ENCODE measurements at regions of chr5 and their contacts with region 1.

Region 1: GRCh38 chr5:132386644-132387286 is 17.3 kb downstream of the SLC22A5 start:
- DNase-seq: peak; percentile 84
- H3K4me3 Mint-ChIP-seq: no peak overlapping the region
- H3K27ac Mint-ChIP-seq: peak overlapping the region; percentile 86
- H3K4me1 Mint-ChIP-seq: peaks cover 57% of the 10 kb centered on the region
- H3K27me3 Mint-ChIP-seq: no peaks in the 10 kb centered on the region

Region 2: GRCh38 chr5:132227485-132228240 is 159.1 kb before region 1 on chr5 and contains the start of gene P4HA2:
- CTCF ChIA-PET with region 1: no interaction called
- POLR2A ChIA-PET with region 1: no interaction called
- DNase-seq: peak; percentile 22
- H3K4me3 Mint-ChIP-seq: peak within 1 kb of the TSS; percentile 45
- H3K27ac Mint-ChIP-seq: no peak within 1 kb of the TSS
- H3K4me1 Mint-ChIP-seq: peaks cover 16% of the 10 kb centered on the region
- H3K27me3 Mint-ChIP-seq: peaks cover 23% of the 10 kb centered on the region
- total RNA-seq, gene P4HA2: 2.3 to 2.5 TPM

Region 3: GRCh38 chr5:132342291-132343180 is 44.2 kb before region 1 on chr5:
- CTCF ChIA-PET with region 1: no interaction called
- POLR2A ChIA-PET with region 1: no interaction called
- DNase-seq: no peak
- H3K4me3 Mint-ChIP-seq: no peak overlapping the region
- H3K27ac Mint-ChIP-seq: no peak overlapping the region
- H3K4me1 Mint-ChIP-seq: no peaks in the 10 kb centered on the region
- H3K27me3 Mint-ChIP-seq: no peaks in the 10 kb centered on the region

Region 4: DNA sequence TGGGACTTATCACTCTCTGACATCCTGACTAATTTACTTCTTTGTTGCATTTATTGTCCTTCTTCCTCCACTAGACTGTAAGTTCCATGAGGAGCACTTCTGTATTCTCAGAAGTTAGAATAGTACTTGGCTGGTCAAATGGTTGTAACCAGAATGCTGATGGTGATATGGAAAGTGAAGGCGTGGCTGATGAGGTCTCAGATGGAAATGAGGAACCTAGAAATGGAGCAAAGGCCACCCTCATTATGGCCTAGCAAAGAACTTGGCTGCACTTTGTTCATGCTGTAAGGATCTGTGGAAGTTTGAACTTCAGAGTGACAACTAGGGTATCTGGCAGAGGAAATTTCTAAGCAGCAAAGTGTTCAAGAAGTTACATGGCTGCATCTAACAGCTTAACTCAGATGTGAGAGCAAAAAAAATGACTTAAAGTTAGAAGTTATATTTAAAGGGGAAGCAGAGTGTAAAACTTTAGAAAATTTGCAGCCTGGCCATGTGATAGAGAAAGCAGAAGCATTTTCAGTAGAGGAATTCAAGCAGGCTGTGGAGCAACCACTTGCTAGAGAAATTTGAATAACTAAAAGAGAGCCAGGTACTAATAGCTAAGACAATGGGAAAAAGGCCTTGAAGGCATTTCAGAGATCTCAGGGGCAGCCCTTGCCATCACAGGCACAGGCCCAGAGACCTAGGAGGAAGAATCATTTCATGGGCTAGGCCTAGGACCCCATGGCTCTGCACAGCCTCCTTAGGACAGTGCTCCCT is 32.2 kb before region 1 on chr5:
- CTCF ChIA-PET with region 1: no interaction called
- POLR2A ChIA-PET with region 1: no interaction called
- DNase-seq: no peak
- H3K4me3 Mint-ChIP-seq: no peak overlapping the region
- H3K27ac Mint-ChIP-seq: no peak overlapping the region
- H3K4me1 Mint-ChIP-seq: no peaks in the 10 kb centered on the region
- H3K27me3 Mint-ChIP-seq: no peaks in the 10 kb centered on the region

Region 5: DNA sequence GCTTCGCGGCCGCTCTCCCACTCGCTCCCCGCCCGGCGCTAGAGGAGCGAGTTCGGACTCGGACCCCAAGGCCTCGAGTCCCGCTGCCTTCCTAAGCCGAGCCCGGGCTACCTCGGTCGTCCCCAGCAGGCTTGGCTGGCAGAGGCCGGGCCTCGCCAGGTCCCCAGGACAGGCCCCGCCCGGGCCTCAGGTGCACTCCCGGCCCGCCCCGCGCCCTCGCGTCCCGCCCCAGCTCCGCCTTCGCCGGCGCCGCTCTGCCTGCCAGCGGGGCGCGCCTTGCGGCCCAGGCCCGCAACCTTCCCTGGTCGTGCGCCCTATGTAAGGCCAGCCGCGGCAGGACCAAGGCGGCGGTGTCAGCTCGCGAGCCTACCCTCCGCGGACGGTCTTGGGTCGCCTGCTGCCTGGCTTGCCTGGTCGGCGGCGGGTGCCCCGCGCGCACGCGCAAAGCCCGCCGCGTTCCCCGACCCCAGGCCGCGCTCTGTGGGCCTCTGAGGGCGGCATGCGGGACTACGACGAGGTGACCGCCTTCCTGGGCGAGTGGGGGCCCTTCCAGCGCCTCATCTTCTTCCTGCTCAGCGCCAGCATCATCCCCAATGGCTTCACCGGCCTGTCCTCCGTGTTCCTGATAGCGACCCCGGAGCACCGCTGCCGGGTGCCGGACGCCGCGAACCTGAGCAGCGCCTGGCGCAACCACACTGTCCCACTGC is 17.1 kb before region 1 on chr5 and contains the start of gene SLC22A5:
- CTCF ChIA-PET with region 1: interaction called, 11 read pairs
- POLR2A ChIA-PET with region 1: no interaction called
- DNase-seq: peak; percentile 59
- H3K4me3 Mint-ChIP-seq: peak within 1 kb of the TSS; percentile 62
- H3K27ac Mint-ChIP-seq: peak within 1 kb of the TSS; percentile 71
- H3K4me1 Mint-ChIP-seq: peaks cover 21% of the 10 kb centered on the region
- H3K27me3 Mint-ChIP-seq: no peaks in the 10 kb centered on the region
- total RNA-seq, gene SLC22A5: 3.2 to 3.6 TPM

Region 6: GRCh38 chr5:132495667-132496190 is 109.0 kb after region 1 on chr5:
- CTCF ChIA-PET with region 1: interaction called, 147 read pairs
- POLR2A ChIA-PET with region 1: interaction called, 4 read pairs
- DNase-seq: peak; percentile 81
- H3K4me3 Mint-ChIP-seq: peak overlapping the region; percentile 92
- H3K27ac Mint-ChIP-seq: peak overlapping the region; percentile 98
- H3K4me1 Mint-ChIP-seq: peaks cover 80% of the 10 kb centered on the region
- H3K27me3 Mint-ChIP-seq: no peaks in the 10 kb centered on the region

Region 7: DNA sequence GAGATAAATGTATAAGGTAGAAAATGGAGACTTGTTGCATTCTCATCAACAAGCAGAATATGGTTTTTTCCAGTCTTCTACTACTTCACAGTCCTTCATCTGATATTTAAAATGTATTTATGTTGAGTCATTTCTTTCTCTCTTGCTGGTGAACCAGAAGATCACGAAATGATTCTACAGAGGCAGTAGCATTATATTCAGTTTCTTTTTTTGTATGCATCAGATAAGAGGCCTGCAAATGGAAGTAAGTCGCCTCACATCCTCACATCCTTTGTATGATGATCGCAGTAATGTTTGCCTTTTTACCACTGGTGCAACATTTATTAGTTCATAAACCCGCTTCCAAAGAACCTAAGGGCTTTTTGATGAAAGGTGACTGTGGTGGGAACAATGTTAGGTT is 249.1 kb after region 1 on chr5:
- CTCF ChIA-PET with region 1: no interaction called
- POLR2A ChIA-PET with region 1: no interaction called
- DNase-seq: no peak
- H3K4me3 Mint-ChIP-seq: no peak overlapping the region
- H3K27ac Mint-ChIP-seq: peak overlapping the region; percentile 36
- H3K4me1 Mint-ChIP-seq: peaks cover 49% of the 10 kb centered on the region
- H3K27me3 Mint-ChIP-seq: no peaks in the 10 kb centered on the region

Measured in activated CD4-positive, alpha-beta T cell treated with anti-CD3 and anti-CD28 coated beads, Interleukin-2, amount 10 ng/mL, durations not matched to agents 7 days and 5 days (primary cell).